ENCODE measurements at regions of chr17 and their contacts with region 1.

Region 1: DNA sequence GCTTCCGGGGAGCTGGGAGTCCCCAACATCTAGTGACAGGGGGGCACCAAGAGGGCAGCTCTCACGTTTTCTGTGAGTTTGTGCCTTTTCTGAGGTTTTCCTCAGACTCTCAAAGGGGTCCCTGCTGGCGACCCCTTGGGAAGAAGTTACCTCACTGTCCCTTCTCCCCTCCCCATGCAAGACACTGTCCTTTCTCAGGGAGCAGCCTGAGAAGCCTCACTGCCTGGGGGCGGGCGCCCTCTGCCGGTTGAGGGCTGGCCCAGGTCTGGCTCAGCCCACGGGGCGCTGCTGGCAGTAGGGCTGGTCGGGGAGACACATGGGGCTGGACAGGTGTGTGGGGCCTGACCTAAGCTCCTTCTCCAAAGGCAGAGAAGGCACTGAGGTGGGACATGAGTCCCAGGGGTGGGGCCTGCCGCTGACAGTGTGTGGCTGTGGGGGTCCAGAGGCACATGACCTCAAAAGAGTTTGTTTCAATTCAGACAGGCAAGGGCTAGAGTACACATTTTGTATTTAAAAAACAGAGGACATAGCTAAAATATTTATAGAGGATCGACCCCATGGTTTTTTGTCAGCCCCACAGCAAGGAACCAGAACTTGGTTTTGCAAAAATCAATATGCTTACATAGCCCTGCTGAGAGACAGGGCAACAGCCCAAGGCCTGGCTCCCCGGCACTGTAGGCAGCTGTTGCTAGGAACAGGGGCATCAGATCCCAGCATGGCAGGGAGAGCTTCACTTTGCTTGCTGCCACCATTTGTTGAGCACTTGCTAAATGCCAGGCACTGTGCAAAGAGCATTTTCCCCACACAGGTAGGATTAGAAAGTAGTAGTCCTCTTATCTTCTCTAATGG is 18.5 kb upstream of the ALDH3A1 start:
- DNase-seq: peak; percentile 41
- ATAC-seq: peak; percentile 96
- H3K4me3 ChIP-seq: no peak overlapping the region
- H3K27ac ChIP-seq: no peak overlapping the region
- H3K4me1 ChIP-seq: peaks cover 0 to 10% of the 10 kb centered on the region in 2 experiments; a peak in 1 of 4 replicates
- H3K27me3 ChIP-seq: no peaks in the 10 kb centered on the region
- CTCF ChIP-seq: peak; percentile 94 to 99 (median 99)
- POLR2A ChIP-seq: no peak
- RAD21 ChIP-seq: peak; percentile 99

Region 2: DNA sequence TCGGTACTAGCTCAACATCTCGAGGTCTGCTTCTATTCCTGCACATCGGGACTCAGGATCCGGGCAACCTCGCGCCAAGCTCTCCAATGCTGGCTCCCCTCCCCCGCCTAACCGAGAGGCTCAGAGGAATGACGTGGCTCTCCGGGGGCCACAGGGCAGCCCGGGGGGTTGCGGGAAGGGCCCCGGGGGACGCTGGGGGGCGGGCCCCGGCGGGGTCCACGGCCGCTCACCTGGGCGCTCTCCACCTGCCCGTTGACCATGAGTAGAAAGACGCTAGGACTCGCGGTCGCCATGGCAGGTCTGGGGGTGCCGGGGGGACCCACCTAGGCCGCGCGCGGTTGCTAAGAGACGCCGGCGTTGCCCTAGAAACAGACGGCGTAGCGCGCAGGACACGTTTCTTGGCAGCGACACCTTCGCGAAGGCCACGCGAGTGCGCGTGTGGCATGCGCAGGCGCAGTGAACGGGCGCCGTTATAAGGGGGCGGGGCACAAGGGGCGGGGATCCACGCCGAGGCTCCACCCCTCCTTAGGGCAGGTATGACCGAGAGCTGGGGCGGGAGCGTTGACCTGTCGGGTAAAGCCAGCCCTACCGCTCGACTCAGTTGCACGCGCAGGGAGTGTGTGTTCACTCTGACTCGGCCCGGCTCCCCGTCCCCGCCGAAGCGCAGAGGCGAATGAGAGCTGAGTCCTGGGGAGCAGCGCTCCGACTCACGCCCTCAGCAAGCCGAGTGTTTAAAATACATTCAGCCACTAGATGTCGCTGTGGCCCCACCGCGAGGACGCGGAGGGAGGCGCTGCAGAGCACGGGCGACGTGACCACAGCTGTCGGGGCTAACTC is 404.2 kb before region 1 on chr17 and contains the start of gene B9D1:
- CTCF ChIA-PET with region 1: interaction called, 39 read pairs
- POLR2A ChIA-PET with region 1: no interaction called
- RAD21 ChIA-PET with region 1: interaction called in 1 of 2 experiments, 8 read pairs
- intact Hi-C with region 1: loop called (anchors 1 kb)
- DNase-seq: peak; percentile 87
- ATAC-seq: peak; percentile 86
- H3K4me3 ChIP-seq: peak within 1 kb of the TSS; percentile 80 to 91
- H3K27ac ChIP-seq: peak within 1 kb of the TSS; percentile 76
- H3K4me1 ChIP-seq: peaks cover 9 to 28% of the 10 kb centered on the region in 2 experiments
- H3K27me3 ChIP-seq: no peaks in the 10 kb centered on the region
- CTCF ChIP-seq: peak; percentile 73 to 99 (median 92)
- POLR2A ChIP-seq: peak; percentile 0
- RAD21 ChIP-seq: peak; percentile 100
- total RNA-seq, gene B9D1: 20.0 TPM

Region 3: DNA sequence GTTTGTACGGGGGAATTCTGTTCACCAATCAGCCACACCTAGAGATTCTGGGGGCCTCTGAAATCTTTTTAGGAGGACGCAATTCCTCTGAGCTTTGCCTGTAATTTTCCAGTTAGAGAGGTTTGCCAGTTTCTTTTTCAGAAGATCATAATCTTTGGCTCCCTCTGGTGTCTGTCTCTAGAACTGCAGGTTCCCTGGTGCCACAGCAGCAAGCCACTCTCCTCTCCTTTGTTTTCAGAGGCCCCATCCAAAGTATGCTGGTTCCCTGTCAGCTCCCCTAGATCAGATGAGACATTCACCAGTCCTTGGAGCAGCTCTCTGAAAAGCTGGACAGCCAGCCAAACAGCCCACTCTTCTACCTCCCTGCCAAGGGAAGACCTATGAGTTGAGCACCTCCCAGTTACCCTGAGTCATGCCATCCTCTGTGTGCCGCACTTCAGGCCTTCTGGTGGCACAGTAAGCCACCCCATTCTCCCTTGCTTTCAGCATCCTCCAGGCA is 319.5 kb before region 1 on chr17:
- CTCF ChIA-PET with region 1: interaction called, 7 read pairs
- POLR2A ChIA-PET with region 1: no interaction called
- RAD21 ChIA-PET with region 1: no interaction called
- intact Hi-C with region 1: loop called (anchors 5 kb)
- DNase-seq: peak; percentile 62
- ATAC-seq: peak; percentile 90
- H3K4me3 ChIP-seq: no peak overlapping the region
- H3K27ac ChIP-seq: no peak overlapping the region
- H3K4me1 ChIP-seq: peaks cover 3 to 8% of the 10 kb centered on the region in 2 experiments; a peak in 3 of 4 replicates
- H3K27me3 ChIP-seq: no peaks in the 10 kb centered on the region
- CTCF ChIP-seq: peak; percentile 86 to 92 (median 87)
- POLR2A ChIP-seq: no peak
- RAD21 ChIP-seq: peak; percentile 96

Region 4: GRCh38 chr17:19513897-19514488 is 252.7 kb before region 1 on chr17:
- CTCF ChIA-PET with region 1: interaction called, 18 read pairs
- POLR2A ChIA-PET with region 1: no interaction called
- RAD21 ChIA-PET with region 1: interaction called in 1 of 2 experiments, 3 read pairs
- intact Hi-C with region 1: loop called (anchors 1 kb)
- DNase-seq: peak; percentile 75
- ATAC-seq: peak; percentile 98
- H3K4me3 ChIP-seq: no peak overlapping the region
- H3K27ac ChIP-seq: no peak overlapping the region
- H3K4me1 ChIP-seq: peaks cover 0 to 5% of the 10 kb centered on the region in 2 experiments; a peak in 3 of 4 replicates
- H3K27me3 ChIP-seq: no peaks in the 10 kb centered on the region
- CTCF ChIP-seq: peak; percentile 83 to 96 (median 94)
- POLR2A ChIP-seq: no peak
- RAD21 ChIP-seq: peak; percentile 96

Region 5: DNA sequence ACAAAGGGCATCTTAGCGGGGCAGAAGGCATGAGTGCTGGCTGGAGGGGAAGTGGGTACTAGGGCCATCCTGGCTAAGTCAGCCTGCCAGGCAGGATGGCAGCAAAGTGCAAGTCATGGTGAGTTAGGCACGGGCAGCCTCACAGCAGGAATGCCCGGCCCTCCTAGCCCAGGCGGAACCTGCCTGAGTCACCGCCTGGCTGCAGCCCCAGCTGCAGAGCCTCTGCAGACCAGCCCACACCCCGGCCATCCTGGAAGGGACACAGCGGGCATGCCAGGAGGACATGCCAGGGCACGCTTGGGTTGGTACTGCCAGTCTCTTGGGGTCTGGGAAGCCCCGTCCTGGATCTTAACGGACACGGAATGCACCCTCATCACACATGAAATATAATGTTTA is 13.6 kb before region 1 on chr17:
- CTCF ChIA-PET with region 1: interaction called, 40 read pairs
- POLR2A ChIA-PET with region 1: interaction called, 16 read pairs
- RAD21 ChIA-PET with region 1: interaction called, 5 to 9 read pairs
- intact Hi-C with region 1: no loop called
- DNase-seq: peak; percentile 79
- ATAC-seq: peak; percentile 85
- H3K4me3 ChIP-seq: peak overlapping the region; percentile 15 to 34
- H3K27ac ChIP-seq: peak overlapping the region; percentile 90
- H3K4me1 ChIP-seq: peaks cover 38 to 47% of the 10 kb centered on the region in 2 experiments
- H3K27me3 ChIP-seq: no peaks in the 10 kb centered on the region
- CTCF ChIP-seq: no peak
- POLR2A ChIP-seq: no peak
- RAD21 ChIP-seq: no peak

Region 6: DNA sequence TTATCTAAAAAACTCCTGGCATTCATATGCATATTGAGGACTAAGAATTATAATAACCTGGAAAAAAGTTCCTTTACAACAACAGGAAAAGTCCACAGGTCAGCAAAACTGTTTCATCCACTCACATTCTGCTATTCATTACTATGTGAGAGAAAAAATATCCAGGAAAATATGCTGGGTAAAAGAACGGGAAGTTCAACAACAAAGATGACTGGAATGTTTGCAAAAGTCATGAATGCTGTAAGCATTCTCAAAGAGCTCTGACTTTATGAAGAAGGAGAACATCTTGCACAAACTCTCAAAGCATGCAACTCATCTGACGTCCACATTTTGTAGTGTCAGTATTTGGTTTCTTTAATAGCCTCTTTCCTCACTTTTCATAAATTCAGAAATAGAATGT is 38.4 kb after region 1 on chr17:
- CTCF ChIA-PET with region 1: no interaction called
- POLR2A ChIA-PET with region 1: no interaction called
- RAD21 ChIA-PET with region 1: no interaction called
- intact Hi-C with region 1: no loop called
- DNase-seq: no peak
- ATAC-seq: no peak
- H3K4me3 ChIP-seq: no peak overlapping the region
- H3K27ac ChIP-seq: no peak overlapping the region
- H3K4me1 ChIP-seq: no peaks in the 10 kb centered on the region
- H3K27me3 ChIP-seq: no peaks in the 10 kb centered on the region
- CTCF ChIP-seq: no peak
- POLR2A ChIP-seq: no peak
- RAD21 ChIP-seq: no peak